Tibial artery (tissue), 4 donors: ENCODE measurements at regions of chr9 and their contacts with region 1.

Region 1: GRCh38 chr9:34035656-34036055 is 13.0 kb downstream of the UBAP2 start:
- DNase-seq: no peak
- H3K4me3 ChIP-seq: no peak overlapping the region
- H3K27ac ChIP-seq: no peak overlapping the region
- H3K4me1 ChIP-seq: peaks cover 0 to 4% (median 0%) of the 10 kb centered on the region in 4 donors
- H3K27me3 ChIP-seq: no peaks in the 10 kb centered on the region
- CTCF ChIP-seq: no peak

Region 2: GRCh38 chr9:34211395-34211794 is 175.7 kb after region 1 on chr9:
- intact Hi-C with region 1: no loop called
- DNase-seq: no peak
- H3K4me3 ChIP-seq: no peak overlapping the region
- H3K27ac ChIP-seq: no peak overlapping the region
- H3K4me1 ChIP-seq: no peaks in the 10 kb centered on the region
- H3K27me3 ChIP-seq: no peaks in the 10 kb centered on the region
- CTCF ChIP-seq: no peak

Region 3: GRCh38 chr9:35423499-35423898 is 1387.8 kb after region 1 on chr9:
- intact Hi-C with region 1: loop called (anchors 5 kb)
- DNase-seq: no peak
- H3K4me3 ChIP-seq: no peak overlapping the region
- H3K27ac ChIP-seq: no peak overlapping the region
- H3K4me1 ChIP-seq: no peaks in the 10 kb centered on the region
- H3K27me3 ChIP-seq: no peaks in the 10 kb centered on the region
- CTCF ChIP-seq: no peak